ENCODE measurements at regions of chr4 and their contacts with region 1.

Region 1: DNA sequence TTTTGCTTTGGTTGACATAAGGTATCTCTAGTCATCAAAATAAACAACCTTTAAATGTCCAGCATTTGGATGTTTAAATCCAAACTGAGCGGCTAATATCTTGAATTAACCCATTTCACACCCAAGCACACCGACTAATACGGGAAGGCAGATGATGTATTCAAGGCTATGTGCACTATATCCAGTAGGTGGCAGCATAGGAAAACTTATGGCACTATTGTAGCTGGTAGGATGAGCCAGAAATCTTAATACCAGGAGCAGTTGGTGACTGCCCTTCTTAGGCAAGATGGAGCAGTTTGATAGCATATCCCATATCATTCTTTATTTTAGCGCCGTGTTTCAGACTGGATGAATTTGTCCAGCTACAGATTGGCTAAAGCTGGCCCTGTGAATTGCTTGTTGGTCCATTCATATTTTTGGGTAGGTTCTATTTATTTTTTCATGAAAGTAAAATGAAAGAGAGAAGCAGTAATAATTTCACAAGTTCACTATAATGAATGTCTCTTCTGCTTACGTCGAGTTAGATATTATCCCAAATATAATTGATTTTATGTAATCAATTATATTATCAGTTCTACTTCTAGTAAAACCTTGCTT is 24.4 kb downstream of the UCHL1 start:
- DNase-seq: no peak
- H3K4me3 Mint-ChIP-seq: no peak overlapping the region
- H3K27ac Mint-ChIP-seq: no peak overlapping the region
- H3K4me1 Mint-ChIP-seq: no peaks in the 10 kb centered on the region
- H3K27me3 Mint-ChIP-seq: no peaks in the 10 kb centered on the region

Region 2: GRCh38 chr4:41212616-41213203 is 68.4 kb before region 1 on chr4:
- intact Hi-C with region 1: no loop called
- DNase-seq: no peak
- H3K4me3 Mint-ChIP-seq: peak overlapping the region; percentile 77
- H3K27ac Mint-ChIP-seq: no peak overlapping the region
- H3K4me1 Mint-ChIP-seq: peaks cover 31% of the 10 kb centered on the region
- H3K27me3 Mint-ChIP-seq: peaks cover 43% of the 10 kb centered on the region

Region 3: GRCh38 chr4:41644288-41644914 is 363.3 kb after region 1 on chr4:
- intact Hi-C with region 1: loop called (anchors 5 kb)
- DNase-seq: no peak
- H3K4me3 Mint-ChIP-seq: no peak overlapping the region
- H3K27ac Mint-ChIP-seq: no peak overlapping the region
- H3K4me1 Mint-ChIP-seq: no peaks in the 10 kb centered on the region
- H3K27me3 Mint-ChIP-seq: peaks cover 23% of the 10 kb centered on the region

Region 4: GRCh38 chr4:41661442-41662076 is 380.4 kb after region 1 on chr4:
- intact Hi-C with region 1: loop called (anchors 1 kb)
- DNase-seq: no peak
- H3K4me3 Mint-ChIP-seq: no peak overlapping the region
- H3K27ac Mint-ChIP-seq: no peak overlapping the region
- H3K4me1 Mint-ChIP-seq: no peaks in the 10 kb centered on the region
- H3K27me3 Mint-ChIP-seq: no peaks in the 10 kb centered on the region

Measured in activated T-helper 1 cell treated with anti-CD3 and anti-CD28 coated beads, Interleukin-12 subunit alpha, Interleukin-12 subunit beta, Interleukin-2, Interleukin-4 antibody, amounts not matched to agents 30 ng/mL and 10 ng/mL and 1 ng/mL, durations not matched to agents 14 hours and 24 hours and 36 hours (primary cell).